Heart right ventricle (tissue), 16 donors: ENCODE measurements at regions of chr6 and their contacts with region 1.

Region 1: DNA sequence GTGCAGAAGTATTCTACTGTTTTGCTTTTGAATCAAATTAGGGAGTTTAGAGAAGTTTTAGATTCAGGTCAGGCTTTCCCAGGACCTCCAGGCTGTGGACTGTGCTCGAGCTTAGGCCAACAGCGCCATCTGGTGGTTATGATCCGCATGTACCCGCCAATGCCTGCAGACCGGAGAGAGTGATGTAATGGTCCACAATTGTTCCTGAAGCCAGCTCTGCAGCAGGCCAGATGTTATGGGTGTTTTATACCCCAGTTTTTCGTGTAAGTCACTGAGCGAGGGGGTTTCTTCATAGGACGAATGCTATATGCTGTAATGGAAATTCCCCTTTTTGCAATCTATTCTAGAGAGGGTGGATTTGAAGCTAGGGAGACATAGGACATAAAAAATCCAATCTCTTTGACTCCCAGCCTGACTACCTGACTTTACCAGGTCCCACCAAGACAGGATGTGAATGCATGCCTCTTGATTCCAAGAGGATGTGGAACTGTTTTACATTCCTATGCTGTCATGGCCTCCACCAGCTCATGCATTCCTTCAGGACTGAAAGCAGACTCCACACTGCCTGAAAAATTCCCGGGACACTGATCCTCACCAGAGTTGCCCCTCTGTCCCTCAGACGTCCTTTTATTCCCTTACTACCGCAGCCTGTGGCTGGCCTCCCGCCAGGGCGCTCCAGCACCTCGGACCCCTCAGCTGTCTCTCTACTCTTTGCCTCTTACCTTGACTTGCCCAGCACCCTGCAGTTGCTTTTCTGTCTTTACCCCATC is 41.2 kb upstream of the LY86 start:
- DNase-seq: peak; percentile 86 to 92
- ATAC-seq: peak; percentile 94 to 98 (median 98)
- H3K4me3 ChIP-seq: peak overlapping the region in 9 of 10 donors; percentile 36 to 68 (median 54)
- H3K27ac ChIP-seq: peak overlapping the region in 6 of 10 donors; percentile 8 to 75 (median 29)
- H3K4me1 ChIP-seq: peaks cover 0 to 20% (median 12%) of the 10 kb centered on the region in 9 donors
- H3K27me3 ChIP-seq: peaks cover 0 to 31% (median 10%) of the 10 kb centered on the region in 7 donors
- CTCF ChIP-seq: peak; percentile 93 to 98 (median 95)

Region 2: DNA sequence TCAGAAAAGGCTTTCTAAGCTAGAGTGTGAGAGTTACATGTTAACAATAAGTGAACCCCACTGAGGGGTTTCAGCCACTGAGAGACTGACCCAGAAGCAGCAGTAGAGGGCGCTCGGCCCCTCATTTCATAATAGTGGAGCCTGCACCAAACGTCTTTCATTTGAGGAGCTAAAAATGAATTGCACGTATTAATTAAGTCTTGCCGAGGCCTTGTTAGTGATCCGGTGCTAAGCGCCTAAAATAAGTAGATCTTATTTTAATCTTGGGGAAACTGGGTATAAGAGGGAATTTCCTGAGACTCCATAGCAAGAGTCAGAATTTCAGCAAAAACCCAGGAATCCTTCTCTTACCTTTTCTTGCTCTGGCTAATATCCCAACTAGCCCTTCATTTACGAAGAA is 1076.3 kb before region 1 on chr6:
- intact Hi-C with region 1: loop called in 5 of 10 experiments (anchors 10 kb)
- DNase-seq: peak; percentile 48 to 59
- ATAC-seq: peak; percentile 70 to 91 (median 86)
- H3K4me3 ChIP-seq: peak overlapping the region in 1 of 10 donors; percentile 18
- H3K27ac ChIP-seq: no peak overlapping the region
- H3K4me1 ChIP-seq: peaks cover 0 to 19% (median 6%) of the 10 kb centered on the region in 9 donors
- H3K27me3 ChIP-seq: no peaks in the 10 kb centered on the region
- CTCF ChIP-seq: peak; percentile 58 to 95 (median 88)

Region 3: GRCh38 chr6:5995949-5996713 is 551.2 kb before region 1 on chr6:
- intact Hi-C with region 1: loop called in 1 of 10 experiments (anchors 5 kb)
- DNase-seq: peak; percentile 79 to 84
- ATAC-seq: peak; percentile 77 to 91 (median 87)
- H3K4me3 ChIP-seq: peak overlapping the region; percentile 32 to 69 (median 60)
- H3K27ac ChIP-seq: peak overlapping the region; percentile 3 to 90 (median 82)
- H3K4me1 ChIP-seq: peaks cover 4 to 71% (median 46%) of the 10 kb centered on the region in 9 donors
- H3K27me3 ChIP-seq: peaks cover 37 to 99% (median 90%) of the 10 kb centered on the region in 7 donors
- CTCF ChIP-seq: peak in 7 of 9 donors; percentile 20 to 53 (median 44)

Region 4: GRCh38 chr6:6057424-6058053 is 489.8 kb before region 1 on chr6:
- intact Hi-C with region 1: loop called (anchors 1 to 5 kb)
- DNase-seq: peak in 1 of 2 donors; percentile 42
- ATAC-seq: peak in 7 of 8 donors; percentile 51 to 70 (median 62)
- H3K4me3 ChIP-seq: no peak overlapping the region
- H3K27ac ChIP-seq: no peak overlapping the region
- H3K4me1 ChIP-seq: no peaks in the 10 kb centered on the region
- H3K27me3 ChIP-seq: peaks cover 0 to 25% (median 7%) of the 10 kb centered on the region in 7 donors
- CTCF ChIP-seq: peak; percentile 32 to 82 (median 71)

Region 5: GRCh38 chr6:6221787-6222535 is 325.3 kb before region 1 on chr6:
- intact Hi-C with region 1: loop called in 1 of 10 experiments (anchors 5 kb)
- DNase-seq: no peak
- ATAC-seq: no peak
- H3K4me3 ChIP-seq: no peak overlapping the region
- H3K27ac ChIP-seq: no peak overlapping the region
- H3K4me1 ChIP-seq: no peaks in the 10 kb centered on the region
- H3K27me3 ChIP-seq: peaks cover 0 to 2% (median 0%) of the 10 kb centered on the region in 7 donors
- CTCF ChIP-seq: peak in 7 of 9 donors; percentile 28 to 49 (median 37)

Region 6: GRCh38 chr6:6293317-6293716 is 254.0 kb before region 1 on chr6:
- intact Hi-C with region 1: no loop called
- DNase-seq: no peak
- ATAC-seq: no peak
- H3K4me3 ChIP-seq: no peak overlapping the region
- H3K27ac ChIP-seq: no peak overlapping the region
- H3K4me1 ChIP-seq: no peaks in the 10 kb centered on the region
- H3K27me3 ChIP-seq: peaks cover 0 to 7% (median 0%) of the 10 kb centered on the region in 7 donors
- CTCF ChIP-seq: no peak

Region 7: GRCh38 chr6:6390849-6391602 is 156.3 kb before region 1 on chr6:
- intact Hi-C with region 1: no loop called
- DNase-seq: no peak
- ATAC-seq: no peak
- H3K4me3 ChIP-seq: no peak overlapping the region
- H3K27ac ChIP-seq: peak overlapping the region in 1 of 10 donors; percentile 16
- H3K4me1 ChIP-seq: peaks cover 0 to 42% (median 5%) of the 10 kb centered on the region in 9 donors
- H3K27me3 ChIP-seq: no peaks in the 10 kb centered on the region
- CTCF ChIP-seq: no peak